Brain microvascular endothelial cell (primary cell): ENCODE measurements at regions of chr6 and their contacts with region 1.

Region 1: GRCh38 chr6:27814660-27815424 is 97.4 kb downstream of the OR2B2 start:
- DNase-seq: peak; percentile 97
- H3K4me3 ChIP-seq: peak overlapping the region; percentile 62
- H3K27ac ChIP-seq: peak overlapping the region; percentile 37
- H3K27me3 ChIP-seq: no peaks in the 10 kb centered on the region
- CTCF ChIP-seq: no peak

Region 2: DNA sequence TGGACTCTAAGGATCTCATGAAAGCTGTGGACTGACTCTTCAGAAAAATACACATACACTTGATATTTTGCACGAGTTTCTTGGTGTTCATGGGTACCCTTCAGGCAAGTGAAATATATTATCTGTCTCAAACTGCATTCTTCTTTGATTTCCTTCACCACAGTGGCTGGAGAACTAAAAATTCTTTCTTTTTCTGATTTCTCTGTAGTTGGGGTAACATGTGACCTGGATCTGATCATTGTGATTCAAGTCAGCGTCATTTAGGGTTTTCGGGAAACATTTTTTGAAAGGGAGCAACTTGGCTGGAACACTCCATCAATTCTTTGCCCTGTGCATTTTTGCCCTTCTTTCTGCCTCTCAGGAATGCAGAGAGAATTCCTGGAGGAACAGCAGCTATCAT is 108.4 kb before region 1 on chr6:
- in situ Hi-C with region 1: no loop called
- DNase-seq: no peak
- H3K4me3 ChIP-seq: no peak overlapping the region
- H3K27ac ChIP-seq: no peak overlapping the region
- H3K27me3 ChIP-seq: no peaks in the 10 kb centered on the region
- CTCF ChIP-seq: no peak

Region 3: GRCh38 chr6:27889628-27890444 is 75.0 kb after region 1 on chr6:
- in situ Hi-C with region 1: loop called (anchors 5 kb)
- DNase-seq: no peak
- H3K4me3 ChIP-seq: peak overlapping the region; percentile 61
- H3K27ac ChIP-seq: peak overlapping the region; percentile 36
- H3K27me3 ChIP-seq: no peaks in the 10 kb centered on the region
- CTCF ChIP-seq: no peak